Activated B cell treated with CpG ODN at 0.5 μM for 24 hours (primary cell): ENCODE measurements at regions of chr18 and their contacts with region 1.

Region 1: GRCh38 chr18:12317664-12318333 is 9.8 kb downstream of the TUBB6 start:
- DNase-seq: no peak
- ATAC-seq: peak; percentile 25
- H3K4me3 Mint-ChIP-seq: peak overlapping the region; percentile 37
- H3K27ac Mint-ChIP-seq: peak overlapping the region; percentile 61
- H3K4me1 Mint-ChIP-seq: peaks cover 72% of the 10 kb centered on the region
- H3K27me3 Mint-ChIP-seq: no peaks in the 10 kb centered on the region
- CTCF ChIP-seq: no peak

Region 2: GRCh38 chr18:12346240-12346565 is 28.4 kb after region 1 on chr18:
- CTCF ChIA-PET with region 1: no interaction called
- POLR2A ChIA-PET with region 1: interaction called, 10 read pairs
- intact Hi-C with region 1: no loop called
- DNase-seq: no peak
- ATAC-seq: no peak
- H3K4me3 Mint-ChIP-seq: no peak overlapping the region
- H3K27ac Mint-ChIP-seq: no peak overlapping the region
- H3K4me1 Mint-ChIP-seq: no peaks in the 10 kb centered on the region
- H3K27me3 Mint-ChIP-seq: no peaks in the 10 kb centered on the region
- CTCF ChIP-seq: no peak